PC-9 (cell line): ENCODE measurements at regions of chr3 and their contacts with region 1.

Region 1: DNA sequence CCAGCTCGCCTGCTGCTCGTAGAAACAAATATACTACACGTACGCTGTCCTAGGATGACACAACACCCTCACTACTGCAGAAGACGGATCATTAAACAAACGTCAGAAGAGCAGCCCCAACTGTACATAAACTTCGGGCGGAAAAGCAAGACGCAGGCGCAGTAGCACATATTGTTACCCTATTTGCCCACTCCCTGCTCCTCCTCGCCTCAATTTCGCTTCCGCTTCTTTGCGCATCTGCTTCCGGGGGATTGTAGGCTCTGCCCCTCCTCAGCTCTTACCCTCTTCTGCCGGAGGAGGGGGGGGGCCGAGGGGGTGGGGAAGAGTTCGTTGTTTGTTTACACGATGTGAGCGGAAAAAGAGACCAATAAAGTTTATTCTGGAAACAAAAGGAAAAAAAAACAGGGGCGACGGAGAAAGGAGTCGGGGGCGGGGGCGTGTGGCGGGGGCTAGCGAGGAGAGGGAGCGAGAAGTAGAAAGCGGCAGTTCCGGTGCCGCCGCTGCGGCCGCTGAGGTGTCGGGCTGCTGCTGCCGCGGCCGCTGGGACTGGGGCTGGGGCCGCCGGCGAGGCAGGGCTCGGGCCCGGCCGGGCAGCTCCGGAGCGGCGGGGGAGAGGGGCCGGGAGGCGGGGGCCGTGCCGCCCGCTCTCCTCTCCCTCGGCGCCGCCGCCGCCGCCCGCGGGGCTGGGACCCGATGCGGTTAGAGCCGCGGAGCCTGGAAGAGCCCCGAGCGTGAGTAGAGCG is at the start of gene PIK3CA:
- DNase-seq: peak; percentile 95 to 98
- H3K4me3 ChIP-seq: peak within 1 kb of the TSS; percentile 85
- H3K27ac ChIP-seq: peak within 1 kb of the TSS; percentile 68
- H3K4me1 ChIP-seq: peaks cover 20% of the 10 kb centered on the region
- H3K27me3 ChIP-seq: no peaks in the 10 kb centered on the region
- CTCF ChIP-seq: no peak
- total RNA-seq, gene PIK3CA: 33.9 and 39.9 TPM in 2 replicates

Region 2: GRCh38 chr3:177810162-177810623 is 1337.9 kb before region 1 on chr3:
- CTCF ChIA-PET with region 1: no interaction called
- POLR2A ChIA-PET with region 1: no interaction called
- intact Hi-C with region 1: loop called (anchors 5 kb)
- DNase-seq: peak in 1 of 2 experiments; percentile 99
- H3K4me3 ChIP-seq: no peak overlapping the region
- H3K27ac ChIP-seq: peak overlapping the region; percentile 82
- H3K4me1 ChIP-seq: peaks cover 34% of the 10 kb centered on the region
- H3K27me3 ChIP-seq: no peaks in the 10 kb centered on the region
- CTCF ChIP-seq: no peak

Region 3: GRCh38 chr3:178367817-178368617 is 780.0 kb before region 1 on chr3:
- CTCF ChIA-PET with region 1: no interaction called
- POLR2A ChIA-PET with region 1: no interaction called
- intact Hi-C with region 1: no loop called
- DNase-seq: no peak
- H3K4me3 ChIP-seq: no peak overlapping the region
- H3K27ac ChIP-seq: no peak overlapping the region
- H3K4me1 ChIP-seq: no peaks in the 10 kb centered on the region; the same call in 1 of the 2 replicates
- H3K27me3 ChIP-seq: no peaks in the 10 kb centered on the region
- CTCF ChIP-seq: no peak

Region 4: GRCh38 chr3:179037351-179037750 is 110.7 kb before region 1 on chr3:
- CTCF ChIA-PET with region 1: no interaction called
- POLR2A ChIA-PET with region 1: no interaction called
- intact Hi-C with region 1: loop called (anchors 1 kb)
- DNase-seq: peak in 1 of 2 experiments; percentile 88
- H3K4me3 ChIP-seq: no peak overlapping the region
- H3K27ac ChIP-seq: no peak overlapping the region
- H3K4me1 ChIP-seq: no peaks in the 10 kb centered on the region
- H3K27me3 ChIP-seq: no peaks in the 10 kb centered on the region
- CTCF ChIP-seq: no peak

Region 5: DNA sequence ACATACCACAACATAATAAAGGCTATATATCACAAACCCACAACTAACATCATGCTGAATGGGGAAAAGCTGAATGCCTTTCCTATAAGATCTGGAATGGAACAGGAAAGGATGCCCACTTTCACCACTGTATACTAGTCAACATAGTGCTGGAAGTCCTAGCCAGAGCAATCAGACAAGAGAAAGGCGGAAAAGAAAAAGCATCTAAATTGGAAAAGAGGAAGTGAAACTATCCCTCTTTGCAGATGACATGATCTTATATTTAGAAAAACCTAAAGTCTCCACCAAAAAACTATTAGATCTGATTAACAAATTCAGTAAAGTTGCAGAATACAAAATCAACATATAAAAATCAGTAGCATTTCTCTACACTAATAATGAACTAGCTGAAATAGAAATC is 14.5 kb before region 1 on chr3:
- CTCF ChIA-PET with region 1: no interaction called
- POLR2A ChIA-PET with region 1: no interaction called
- intact Hi-C with region 1: loop called (anchors 1 kb)
- DNase-seq: no peak
- H3K4me3 ChIP-seq: no peak overlapping the region
- H3K27ac ChIP-seq: no peak overlapping the region
- H3K4me1 ChIP-seq: peaks cover 4% of the 10 kb centered on the region; the same call in 1 of the 2 replicates
- H3K27me3 ChIP-seq: no peaks in the 10 kb centered on the region
- CTCF ChIP-seq: no peak

Region 6: DNA sequence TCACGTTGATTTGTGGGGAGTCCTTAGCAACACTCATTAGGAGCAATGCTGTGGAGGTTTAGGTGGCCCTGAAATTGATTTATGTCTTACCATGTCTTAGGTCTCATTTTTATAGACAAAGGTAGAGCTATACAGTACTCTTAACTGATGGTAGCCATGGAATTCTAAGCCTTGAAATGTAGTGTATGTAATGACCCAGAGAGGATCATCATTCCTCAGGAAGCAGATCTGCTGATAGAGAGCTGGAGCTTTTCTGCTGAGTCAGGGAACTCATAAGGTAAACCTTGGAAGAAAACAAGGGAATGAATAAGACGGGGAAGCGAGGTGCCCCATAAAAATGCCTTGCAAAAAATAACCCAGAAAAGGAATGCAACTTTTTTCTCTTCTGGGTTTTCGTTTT is 140.8 kb after region 1 on chr3:
- CTCF ChIA-PET with region 1: interaction called, 12 read pairs
- POLR2A ChIA-PET with region 1: no interaction called
- intact Hi-C with region 1: no loop called
- DNase-seq: no peak
- H3K4me3 ChIP-seq: no peak overlapping the region
- H3K27ac ChIP-seq: no peak overlapping the region
- H3K4me1 ChIP-seq: no peaks in the 10 kb centered on the region
- H3K27me3 ChIP-seq: no peaks in the 10 kb centered on the region
- CTCF ChIP-seq: no peak

Region 7: DNA sequence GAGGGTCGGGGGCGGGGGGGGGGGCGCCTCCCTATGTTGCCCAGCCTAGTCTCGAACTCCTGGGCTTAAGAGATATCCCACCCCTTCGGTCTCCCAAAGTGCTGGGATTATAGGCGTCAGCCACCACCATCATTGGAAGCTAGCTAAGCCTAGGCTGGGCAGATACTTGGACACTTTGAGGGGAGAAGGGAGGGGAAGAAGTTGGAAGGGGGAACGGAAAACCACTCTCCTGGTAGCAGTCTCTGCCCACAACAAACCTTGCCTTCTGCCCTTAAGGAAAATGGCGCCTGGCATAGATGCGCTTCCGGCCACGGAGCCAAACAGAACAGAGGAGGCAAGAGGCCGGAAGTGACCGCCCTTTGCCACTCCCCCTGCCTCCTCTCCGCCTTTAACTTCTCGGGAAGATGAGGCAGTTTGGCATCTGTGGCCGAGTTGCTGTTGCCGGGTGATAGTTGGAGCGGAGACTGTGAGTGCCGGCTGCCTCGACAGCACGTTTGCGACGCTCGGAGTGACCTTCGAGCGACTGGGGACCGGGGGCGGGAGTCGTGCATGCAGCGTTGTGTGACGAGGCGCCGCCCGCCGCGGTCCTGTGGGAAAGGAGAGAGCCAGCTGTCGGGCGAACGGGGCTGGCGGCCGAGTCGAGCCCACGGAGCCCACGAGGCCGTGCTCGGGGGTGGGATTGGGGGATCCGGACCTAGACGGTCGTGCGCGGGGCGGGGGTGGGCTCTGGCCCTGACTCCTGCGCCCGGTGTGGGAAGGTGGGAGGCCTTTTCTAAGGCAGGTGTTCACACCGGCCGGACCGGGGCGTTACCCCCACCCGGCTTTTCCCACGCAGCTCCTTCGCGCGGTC is 199.5 kb after region 1 on chr3 and contains the start of gene MFN1:
- CTCF ChIA-PET with region 1: no interaction called
- POLR2A ChIA-PET with region 1: no interaction called
- intact Hi-C with region 1: loop called (anchors 1 kb)
- DNase-seq: peak; percentile 95
- H3K4me3 ChIP-seq: peak within 1 kb of the TSS; percentile 77
- H3K27ac ChIP-seq: peak within 1 kb of the TSS; percentile 62
- H3K4me1 ChIP-seq: peaks cover 17% of the 10 kb centered on the region
- H3K27me3 ChIP-seq: no peaks in the 10 kb centered on the region
- CTCF ChIP-seq: no peak
- total RNA-seq, gene MFN1: 69.1 and 69.6 TPM in 2 replicates